ENCODE measurements at regions of chr3 and their contacts with region 1.

Region 1: DNA sequence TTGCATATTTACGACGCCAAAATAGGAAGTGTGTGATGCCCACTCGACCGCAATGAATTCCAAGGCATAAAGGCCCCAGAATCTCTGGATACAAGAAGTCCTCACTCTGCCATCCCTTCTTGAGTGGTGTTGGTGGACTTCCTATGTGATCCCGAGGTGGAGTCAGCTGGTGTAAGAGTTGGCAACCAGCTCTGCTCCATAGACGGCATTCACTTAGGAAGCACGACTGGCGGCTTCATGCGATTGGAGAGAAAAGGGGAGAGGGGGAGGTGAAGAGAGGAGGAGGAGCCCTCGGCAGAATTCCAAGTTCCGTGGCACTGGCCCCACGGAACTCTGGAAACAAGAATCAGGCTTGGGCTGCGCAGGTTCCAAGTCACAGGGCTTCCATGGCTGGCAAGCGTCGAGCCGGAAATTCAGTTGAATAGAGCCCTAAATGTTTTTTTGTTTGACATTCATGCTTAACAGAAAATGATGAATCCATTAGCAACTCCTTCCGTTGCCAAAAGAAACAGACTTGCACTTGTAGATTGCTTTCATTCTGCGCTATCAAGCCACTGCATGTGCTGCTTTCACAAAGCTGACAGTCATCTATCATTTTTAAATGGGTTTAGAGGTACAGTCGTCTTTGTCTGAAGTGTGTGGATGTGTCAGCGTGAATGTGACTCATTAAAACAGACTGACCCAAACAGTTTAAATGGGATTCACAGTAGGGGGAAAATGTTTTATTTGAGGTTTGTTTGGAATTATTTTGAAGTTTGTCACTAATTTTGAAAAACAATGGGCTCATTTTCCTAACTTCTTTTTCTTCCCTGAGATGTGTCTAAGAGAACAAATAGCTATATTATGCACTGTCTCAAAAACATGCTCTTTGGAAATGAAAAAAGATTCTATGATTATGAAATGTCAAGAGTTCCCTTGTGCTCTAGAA is 428.3 kb upstream of the ATP11B start:
- DNase-seq: peak; percentile 66
- ATAC-seq: peak; percentile 89
- H3K4me3 ChIP-seq: peak overlapping the region; percentile 38; the same call in 1 of the 2 replicates
- H3K27ac ChIP-seq: no peak overlapping the region
- H3K4me1 ChIP-seq: peaks cover 16% of the 10 kb centered on the region
- H3K27me3 ChIP-seq: no peaks in the 10 kb centered on the region
- CTCF ChIP-seq: 0 out of 2 replicates have a peak, but pooled peaks have one; percentile 1

Region 2: DNA sequence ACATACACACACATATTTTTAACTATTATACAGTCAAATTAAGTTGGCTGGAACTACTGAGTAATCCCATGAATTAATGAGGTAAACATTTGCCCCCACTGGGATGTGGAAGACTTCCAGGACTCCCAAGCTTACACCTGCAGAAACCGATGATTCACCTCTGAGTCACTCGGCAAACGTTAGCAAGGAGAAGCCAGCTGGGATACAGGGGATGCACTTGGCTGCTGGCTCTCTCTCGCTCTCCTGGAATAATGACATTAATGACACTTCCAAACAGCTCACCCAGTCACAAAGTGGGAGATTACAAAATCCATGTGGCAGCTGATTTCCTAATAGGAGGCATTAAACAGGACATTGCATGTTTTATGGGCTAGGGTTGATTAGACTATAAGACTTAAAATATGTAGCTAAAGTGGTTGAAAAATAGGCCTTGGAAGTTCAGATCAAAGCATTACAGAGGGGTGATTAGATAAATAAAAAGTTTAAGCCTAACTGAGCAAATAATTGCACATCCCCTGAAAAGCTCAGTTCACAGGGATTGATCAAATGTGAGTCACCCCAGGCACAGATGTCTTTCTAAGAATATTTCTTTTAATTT is 152.4 kb before region 1 on chr3:
- CTCF ChIA-PET with region 1: no interaction called
- POLR2A ChIA-PET with region 1: no interaction called
- intact Hi-C with region 1: loop called (anchors 5 kb)
- DNase-seq: peak; percentile 99
- ATAC-seq: peak; percentile 95
- H3K4me3 ChIP-seq: peak overlapping the region; percentile 10; the same call in 1 of the 2 replicates
- H3K27ac ChIP-seq: peak overlapping the region; percentile 89
- H3K4me1 ChIP-seq: peaks cover 26% of the 10 kb centered on the region
- H3K27me3 ChIP-seq: no peaks in the 10 kb centered on the region
- CTCF ChIP-seq: no peak

Measured in PC-3 (cell line).